Posterior cingulate gyrus (tissue), 11 donors: ENCODE measurements at regions of chr12 and their contacts with region 1.

Region 1: DNA sequence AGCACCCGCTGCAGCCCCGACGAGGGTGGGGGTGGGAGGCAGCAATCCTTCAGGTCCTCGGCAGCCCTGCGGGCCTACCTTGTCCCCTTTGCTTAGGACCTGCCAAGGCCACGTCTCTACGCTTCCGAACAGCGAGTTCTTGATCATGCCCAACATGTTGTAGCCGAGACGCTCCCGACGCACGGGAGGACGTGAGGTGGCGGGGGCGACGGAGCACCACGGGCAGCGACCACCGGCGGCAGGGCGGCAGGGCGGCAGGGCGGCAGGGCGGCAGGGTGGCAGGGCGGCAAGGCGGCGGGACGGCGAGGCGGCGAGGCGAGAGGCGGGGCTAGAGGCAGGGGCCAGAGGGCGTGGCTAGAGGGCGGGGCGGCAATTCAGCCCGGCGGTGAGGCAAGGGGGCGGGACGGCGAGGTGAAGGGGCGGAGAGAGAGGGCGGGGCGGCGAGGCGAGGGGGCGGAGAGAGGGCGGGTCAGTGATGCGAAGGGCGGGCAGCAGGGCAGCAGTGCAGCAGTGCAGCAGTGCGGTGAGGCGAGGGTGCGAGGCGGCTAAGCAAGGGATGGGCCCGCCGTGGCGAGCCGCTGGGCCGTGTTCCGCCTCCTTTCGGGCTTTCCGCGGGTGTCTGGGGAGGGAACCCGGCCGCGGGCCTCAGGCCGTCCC is at the start of gene HEBP1:
- DNase-seq: peak; percentile 95 to 100 (median 97)

Region 2: GRCh38 chr12:12813120-12814101 is 186.7 kb before region 1 on chr12 and contains the start of gene DDX47:
- intact Hi-C with region 1: loop called (anchors 10 kb)
- DNase-seq: peak; percentile 89 to 99 (median 96)

Region 3: GRCh38 chr12:13044002-13044905 is 44.2 kb after region 1 on chr12 and contains the start of gene FAM234B:
- intact Hi-C with region 1: loop called (anchors 5 kb)
- DNase-seq: peak; percentile 71 to 98 (median 84)

Region 4: GRCh38 chr12:13099066-13099843 is 99.2 kb after region 1 on chr12:
- intact Hi-C with region 1: loop called (anchors 5 kb)
- DNase-seq: no peak

Region 5: GRCh38 chr12:13222076-13222475 is 222.0 kb after region 1 on chr12:
- intact Hi-C with region 1: no loop called
- DNase-seq: no peak